GM10248 (cell line): ENCODE measurements at regions of chr21 and their contacts with region 1.

Region 1: GRCh38 chr21:29298348-29299045 is at the start of gene BACH1:
- DNase-seq: peak; percentile 93
- CTCF ChIP-seq: peak; percentile 48

Region 2: GRCh38 chr21:29078869-29079767 is 219.4 kb before region 1 on chr21:
- CTCF ChIA-PET with region 1: interaction called, 3 read pairs
- POLR2A ChIA-PET with region 1: interaction called, 10 read pairs
- DNase-seq: no peak
- CTCF ChIP-seq: no peak

Region 3: GRCh38 chr21:29232601-29233546 is 65.6 kb before region 1 on chr21:
- CTCF ChIA-PET with region 1: interaction called, 5 read pairs
- POLR2A ChIA-PET with region 1: interaction called, 30 read pairs
- DNase-seq: no peak
- CTCF ChIP-seq: no peak

Region 4: GRCh38 chr21:29315131-29315749 is 16.7 kb after region 1 on chr21:
- CTCF ChIA-PET with region 1: interaction called, 7 read pairs
- POLR2A ChIA-PET with region 1: interaction called, 12 read pairs
- DNase-seq: no peak
- CTCF ChIP-seq: no peak